ENCODE measurements at regions of chr15 and their contacts with region 1.

Region 1: DNA sequence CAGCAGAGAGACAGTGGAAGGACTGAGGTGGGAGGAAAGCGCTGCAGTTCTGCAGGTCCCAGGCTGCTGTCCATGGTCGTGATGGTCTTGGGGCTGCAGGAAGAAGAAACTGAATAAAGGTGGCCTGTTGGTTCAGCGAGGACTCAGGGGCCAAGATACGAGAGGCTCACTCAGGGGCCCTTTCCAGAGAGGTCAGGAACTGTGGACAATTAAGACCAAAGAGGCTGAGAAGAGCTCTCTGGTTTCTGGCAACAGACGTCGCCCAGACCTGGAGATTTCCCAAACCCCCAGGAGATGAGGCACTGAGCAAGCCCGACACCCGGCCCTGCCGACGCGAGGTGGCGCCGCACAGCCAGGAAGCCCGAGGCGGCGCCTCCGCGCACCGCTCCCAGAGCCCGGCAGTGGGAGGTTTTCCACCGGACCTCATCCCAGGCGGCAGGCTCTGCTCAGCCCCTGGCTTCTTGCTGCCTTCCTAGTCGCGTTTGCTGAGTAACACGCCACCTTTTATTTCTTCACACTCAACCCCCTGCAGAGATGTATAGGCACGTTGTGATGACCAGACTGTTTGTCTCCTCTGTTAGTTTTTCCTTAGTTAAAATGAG is 56.4 kb upstream of the ARRDC4 start:
- DNase-seq: peak; percentile 86

Region 2: DNA sequence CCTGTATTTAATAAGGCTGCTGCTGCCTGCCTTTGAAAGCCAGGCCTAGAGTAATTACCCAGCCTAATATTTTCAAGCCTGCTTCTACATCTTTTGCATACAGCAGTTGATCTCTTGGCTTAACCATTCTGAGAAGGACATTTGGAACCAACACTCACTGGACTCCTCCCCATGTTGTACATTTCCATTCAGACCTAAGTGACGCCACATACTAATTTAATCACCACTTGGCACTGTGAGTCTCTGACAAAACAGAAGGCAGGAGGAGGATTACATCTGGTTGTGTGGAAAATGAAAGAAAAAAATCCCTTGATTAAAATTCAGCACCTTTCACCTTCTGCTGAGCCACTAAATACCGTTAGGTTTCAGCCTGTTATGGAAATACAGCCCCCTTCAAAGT is 45.8 kb before region 1 on chr15:
- intact Hi-C with region 1: no loop called
- DNase-seq: no peak

Region 3: GRCh38 chr15:98177924-98178592 is 274.0 kb after region 1 on chr15:
- intact Hi-C with region 1: loop called (anchors 2 kb)
- DNase-seq: no peak

Region 4: DNA sequence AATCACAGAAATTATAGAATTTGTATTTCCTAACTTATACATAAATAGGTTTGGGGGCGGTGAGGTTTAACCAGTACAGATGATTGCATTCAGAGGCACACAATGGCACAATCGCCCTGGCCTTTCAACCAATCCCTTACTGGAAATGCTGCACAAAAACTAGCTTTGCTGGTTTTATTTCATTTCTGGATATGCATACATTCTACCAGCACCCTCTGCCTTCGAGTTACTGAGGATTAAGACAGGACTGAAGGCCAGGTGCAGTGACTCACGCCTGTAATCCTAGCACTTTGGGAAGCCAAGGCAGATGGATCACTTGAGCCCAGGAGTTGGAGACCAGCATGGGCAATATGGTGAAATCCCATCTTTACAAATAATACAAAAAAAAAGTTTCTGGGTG is 392.6 kb after region 1 on chr15:
- intact Hi-C with region 1: loop called (anchors 5 kb)
- DNase-seq: no peak